A673 (cell line): ENCODE measurements at regions of chr3 and their contacts with region 1.

Region 1: DNA sequence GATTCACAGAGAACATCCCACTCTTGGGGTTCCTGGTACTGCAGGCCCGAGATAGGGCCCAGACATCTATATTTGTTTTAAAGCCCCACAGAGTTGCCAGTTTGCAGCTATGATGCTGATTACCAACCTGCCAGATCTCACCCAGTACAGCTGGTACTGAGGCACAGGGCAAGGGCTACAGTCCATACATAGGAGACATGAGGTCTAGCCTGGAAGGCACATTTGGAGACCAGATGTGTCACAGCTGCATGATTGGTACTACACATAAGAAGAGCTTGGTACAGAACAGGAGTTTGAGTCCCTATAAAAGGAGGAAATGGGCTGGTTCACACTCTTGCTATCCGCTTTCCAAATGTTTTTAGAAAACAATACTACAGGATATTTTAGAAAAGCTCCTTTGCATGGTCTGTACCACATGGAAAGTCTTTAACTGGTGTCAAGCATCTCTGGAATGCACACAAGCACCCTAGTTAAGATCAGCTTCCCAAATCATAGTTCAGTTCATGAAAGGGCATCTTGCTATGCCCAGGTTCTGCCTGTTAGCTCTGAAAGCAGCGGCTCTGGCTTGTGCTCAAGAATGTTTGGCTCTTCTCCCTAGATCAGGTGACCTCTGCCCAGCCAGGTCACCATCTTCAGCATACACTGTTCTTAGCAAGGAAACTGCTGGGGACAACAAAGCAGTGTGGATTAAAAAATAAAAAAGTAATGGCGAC is 20.6 kb downstream of the MTMR14 start:
- DNase-seq: no peak
- H3K4me3 ChIP-seq: no peak overlapping the region
- H3K27ac ChIP-seq: no peak overlapping the region
- H3K4me1 ChIP-seq: no peaks in the 10 kb centered on the region
- H3K27me3 ChIP-seq: no peaks in the 10 kb centered on the region
- CTCF ChIP-seq: no peak

Region 2: GRCh38 chr3:8529181-8529637 is 1140.7 kb before region 1 on chr3:
- CTCF ChIA-PET with region 1: no interaction called
- POLR2A ChIA-PET with region 1: no interaction called
- intact Hi-C with region 1: no loop called
- DNase-seq: no peak
- H3K4me3 ChIP-seq: no peak overlapping the region
- H3K27ac ChIP-seq: no peak overlapping the region
- H3K4me1 ChIP-seq: no peaks in the 10 kb centered on the region
- H3K27me3 ChIP-seq: peaks cover 7% of the 10 kb centered on the region
- CTCF ChIP-seq: no peak

Region 3: GRCh38 chr3:9649791-9650521 is 19.9 kb before region 1 on chr3:
- CTCF ChIA-PET with region 1: interaction called, 6 read pairs
- POLR2A ChIA-PET with region 1: interaction called, 10 read pairs
- intact Hi-C with region 1: no loop called
- DNase-seq: no peak
- H3K4me3 ChIP-seq: peak overlapping the region; percentile 93
- H3K27ac ChIP-seq: peak overlapping the region; percentile 81
- H3K4me1 ChIP-seq: no peaks in the 10 kb centered on the region
- H3K27me3 ChIP-seq: no peaks in the 10 kb centered on the region
- CTCF ChIP-seq: no peak